ENCODE measurements at regions of chr3 and their contacts with region 1.

Region 1: GRCh38 chr3:49802719-49803464 is at the start of gene INKA1:
- DNase-seq: peak; percentile 92
- H3K4me3 Mint-ChIP-seq: peak within 1 kb of the TSS; percentile 78
- H3K27ac Mint-ChIP-seq: peak within 1 kb of the TSS; percentile 67
- H3K4me1 Mint-ChIP-seq: peaks cover 46% of the 10 kb centered on the region
- H3K27me3 Mint-ChIP-seq: peaks cover 68% of the 10 kb centered on the region

Region 2: GRCh38 chr3:49813497-49814174 is 10.7 kb after region 1 on chr3 and contains the start of gene UBA7:
- CTCF ChIA-PET with region 1: interaction called, 25 read pairs
- DNase-seq: peak; percentile 61
- H3K4me3 Mint-ChIP-seq: peak within 1 kb of the TSS; percentile 99
- H3K27ac Mint-ChIP-seq: peak within 1 kb of the TSS; percentile 96
- H3K4me1 Mint-ChIP-seq: peaks cover 31% of the 10 kb centered on the region
- H3K27me3 Mint-ChIP-seq: no peaks in the 10 kb centered on the region

Region 3: DNA sequence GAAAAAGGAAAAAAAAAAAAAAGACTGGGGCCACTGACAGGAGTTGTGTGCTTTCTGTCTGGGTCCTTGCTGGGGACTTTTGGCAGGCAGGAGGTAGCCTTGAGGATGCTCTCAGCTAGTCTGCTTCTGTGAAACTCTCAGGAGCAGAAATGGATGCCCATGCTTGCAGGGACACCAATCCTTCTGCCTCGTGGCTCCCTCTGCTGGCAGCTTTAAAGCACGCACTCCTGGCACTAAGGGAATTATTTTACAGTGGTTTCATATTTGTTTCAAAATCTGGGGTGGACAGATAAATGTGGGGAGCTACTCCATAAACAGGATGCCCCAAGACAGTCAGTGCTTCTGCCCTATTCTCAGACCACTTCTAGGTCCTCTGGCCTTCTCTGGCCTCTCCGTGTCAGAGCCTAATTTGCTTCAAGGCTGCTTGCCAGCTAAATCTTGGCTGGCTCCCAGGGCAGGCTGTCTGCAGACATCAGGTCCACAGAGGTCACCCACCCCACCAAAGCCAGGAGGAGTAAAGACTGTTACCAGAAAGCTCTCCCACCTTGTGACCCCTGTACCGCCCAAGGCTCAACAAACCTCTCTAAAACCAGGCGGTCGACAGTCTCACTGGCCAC is 36.4 kb after region 1 on chr3:
- CTCF ChIA-PET with region 1: interaction called, 225 read pairs
- DNase-seq: peak; percentile 90
- H3K4me3 Mint-ChIP-seq: no peak overlapping the region
- H3K27ac Mint-ChIP-seq: no peak overlapping the region
- H3K4me1 Mint-ChIP-seq: no peaks in the 10 kb centered on the region
- H3K27me3 Mint-ChIP-seq: no peaks in the 10 kb centered on the region

Region 4: DNA sequence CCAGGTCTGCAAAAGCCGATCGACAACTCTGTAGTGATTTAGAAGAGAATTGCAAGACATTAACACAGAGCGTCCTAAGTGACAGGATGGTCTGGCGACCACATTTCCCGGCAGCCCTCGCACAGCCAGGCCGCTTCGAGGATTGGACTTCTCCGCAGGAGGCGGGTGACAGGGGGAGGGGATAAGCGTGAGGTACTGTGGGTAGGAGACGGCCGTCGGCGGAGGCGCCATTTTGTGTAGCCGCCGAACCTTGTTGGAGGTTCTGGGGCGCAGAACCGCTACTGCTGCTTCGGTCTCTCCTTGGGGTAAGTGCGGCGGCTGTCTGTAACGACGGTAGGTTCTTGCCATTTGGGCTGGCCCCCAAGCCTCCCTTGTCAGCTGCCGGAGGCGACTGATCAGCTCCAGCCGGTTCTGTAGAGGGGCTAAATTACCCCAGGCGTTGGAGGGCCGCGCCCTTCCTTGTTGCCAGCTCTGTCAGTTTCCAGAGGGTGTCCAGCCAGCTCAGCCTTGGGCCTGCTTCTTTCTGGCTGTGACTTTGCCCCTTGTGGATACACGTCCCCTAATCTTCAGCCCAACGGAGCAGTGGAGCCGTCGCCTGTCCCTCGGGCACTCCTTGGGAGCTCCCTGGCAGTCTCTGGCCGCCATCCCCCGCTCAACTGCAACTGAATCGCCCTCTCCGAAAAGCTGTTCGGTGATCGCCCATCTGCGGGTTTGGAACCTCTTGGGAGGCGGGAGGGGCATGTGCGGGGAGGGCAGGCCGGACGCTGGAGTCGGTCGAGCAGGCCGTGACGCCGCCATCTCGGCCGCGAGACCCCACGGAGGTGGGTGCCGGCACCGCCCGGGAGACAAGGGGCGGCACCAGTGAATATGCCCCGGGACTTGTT is 286.1 kb after region 1 on chr3 and contains the start of gene RBM5:
- CTCF ChIA-PET with region 1: interaction called, 12 read pairs
- DNase-seq: peak; percentile 97
- H3K4me3 Mint-ChIP-seq: peak within 1 kb of the TSS; percentile 94
- H3K27ac Mint-ChIP-seq: peak within 1 kb of the TSS; percentile 98
- H3K4me1 Mint-ChIP-seq: peaks cover 29% of the 10 kb centered on the region
- H3K27me3 Mint-ChIP-seq: no peaks in the 10 kb centered on the region